CD8-positive, alpha-beta memory T cell (primary cell): ENCODE measurements at regions of chrX and their contacts with region 1.

Region 1: GRCh38 chrX:151151665-151152267 is 24.6 kb upstream of the GPR50 start:
- DNase-seq: peak in 2 of 5 donors; percentile 21 to 27
- H3K4me3 ChIP-seq: no peak overlapping the region
- H3K4me3 Mint-ChIP-seq: peak overlapping the region in 1 of 7 donors; percentile 19
- H3K27ac ChIP-seq: no peak overlapping the region
- H3K27ac Mint-ChIP-seq: no peak overlapping the region
- H3K4me1 ChIP-seq: no peaks in the 10 kb centered on the region
- H3K4me1 Mint-ChIP-seq: no peaks in the 10 kb centered on the region
- H3K27me3 ChIP-seq: no peaks in the 10 kb centered on the region
- H3K27me3 Mint-ChIP-seq: peaks cover 13 to 14% of the 10 kb centered on the region in 2 donors

Region 2: GRCh38 chrX:151268836-151269235 is 117.1 kb after region 1 on chrX:
- CTCF ChIA-PET with region 1: no interaction called
- POLR2A ChIA-PET with region 1: no interaction called
- DNase-seq: no peak
- H3K4me3 ChIP-seq: no peak overlapping the region
- H3K4me3 Mint-ChIP-seq: no peak overlapping the region
- H3K27ac ChIP-seq: no peak overlapping the region
- H3K27ac Mint-ChIP-seq: no peak overlapping the region
- H3K4me1 ChIP-seq: no peaks in the 10 kb centered on the region
- H3K4me1 Mint-ChIP-seq: no peaks in the 10 kb centered on the region
- H3K27me3 ChIP-seq: no peaks in the 10 kb centered on the region
- H3K27me3 Mint-ChIP-seq: peaks cover 7 to 20% of the 10 kb centered on the region in 2 donors

Region 3: GRCh38 chrX:151680805-151681204 is 529.0 kb after region 1 on chrX:
- CTCF ChIA-PET with region 1: interaction called, 13 read pairs
- POLR2A ChIA-PET with region 1: no interaction called
- DNase-seq: peak in 4 of 5 donors; percentile 20 to 61 (median 26)
- H3K4me3 ChIP-seq: no peak overlapping the region
- H3K4me3 Mint-ChIP-seq: no peak overlapping the region
- H3K27ac ChIP-seq: no peak overlapping the region
- H3K27ac Mint-ChIP-seq: peak overlapping the region in 1 of 8 donors; percentile 51
- H3K4me1 ChIP-seq: no peaks in the 10 kb centered on the region
- H3K4me1 Mint-ChIP-seq: no peaks in the 10 kb centered on the region
- H3K27me3 ChIP-seq: no peaks in the 10 kb centered on the region
- H3K27me3 Mint-ChIP-seq: peaks cover 9 to 15% of the 10 kb centered on the region in 2 donors